ENCODE measurements at regions of chr11 and their contacts with region 1.

Region 1: DNA sequence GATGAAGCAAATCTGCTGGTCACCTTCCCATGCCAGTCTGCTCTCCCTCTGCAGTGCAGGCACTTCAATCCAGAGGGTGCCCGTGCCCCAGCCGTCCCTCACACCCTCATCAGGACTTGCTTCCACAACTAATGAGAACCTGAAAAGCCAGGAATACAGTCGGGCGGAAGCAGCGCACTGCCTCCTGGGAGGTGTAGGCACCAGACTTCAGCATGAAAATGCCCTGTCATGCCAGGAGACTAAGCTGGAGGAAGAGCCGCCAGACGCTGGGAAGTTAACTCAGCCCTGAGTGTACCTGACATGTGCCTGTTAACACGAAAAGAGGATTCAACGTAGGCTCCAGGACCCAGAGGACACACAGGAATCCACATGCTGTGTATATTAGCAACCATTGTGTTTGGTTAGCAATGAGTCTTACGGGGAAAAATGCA is 40.1 kb upstream of the FLI1 start:
- DNase-seq: peak; percentile 80
- H3K4me3 ChIP-seq: no peak overlapping the region
- H3K27ac ChIP-seq: no peak overlapping the region
- H3K4me1 ChIP-seq: no peaks in the 10 kb centered on the region
- H3K27me3 ChIP-seq: peaks cover 5% of the 10 kb centered on the region
- CTCF ChIP-seq: no peak

Region 2: DNA sequence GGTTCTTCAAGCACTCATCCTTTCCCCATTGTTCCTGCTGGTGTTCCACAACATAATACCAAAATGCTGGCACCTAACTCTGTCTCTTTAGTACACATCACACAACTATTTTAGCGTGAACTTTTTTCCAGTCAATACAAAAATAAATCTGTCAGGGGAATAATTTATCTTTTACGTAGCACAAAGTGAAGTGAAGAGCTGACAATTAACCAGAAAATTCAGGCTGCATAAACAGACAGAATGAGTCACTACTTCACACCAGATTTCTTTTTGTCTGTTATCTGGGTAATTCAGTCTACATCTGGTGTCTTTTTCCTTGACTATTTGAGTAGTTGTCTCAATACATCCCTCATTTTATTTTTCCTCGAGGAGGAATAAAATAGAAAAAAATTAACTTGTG is 58.6 kb before region 1 on chr11:
- CTCF ChIA-PET with region 1: no interaction called
- dilution Hi-C with region 1: no loop called
- in situ Hi-C with region 1: no loop called
- intact Hi-C with region 1: loop called (anchors 2 kb)
- DNase-seq: no peak
- H3K4me3 ChIP-seq: no peak overlapping the region
- H3K27ac ChIP-seq: no peak overlapping the region
- H3K4me1 ChIP-seq: no peaks in the 10 kb centered on the region
- H3K27me3 ChIP-seq: peaks cover 4% of the 10 kb centered on the region
- CTCF ChIP-seq: no peak

Region 3: DNA sequence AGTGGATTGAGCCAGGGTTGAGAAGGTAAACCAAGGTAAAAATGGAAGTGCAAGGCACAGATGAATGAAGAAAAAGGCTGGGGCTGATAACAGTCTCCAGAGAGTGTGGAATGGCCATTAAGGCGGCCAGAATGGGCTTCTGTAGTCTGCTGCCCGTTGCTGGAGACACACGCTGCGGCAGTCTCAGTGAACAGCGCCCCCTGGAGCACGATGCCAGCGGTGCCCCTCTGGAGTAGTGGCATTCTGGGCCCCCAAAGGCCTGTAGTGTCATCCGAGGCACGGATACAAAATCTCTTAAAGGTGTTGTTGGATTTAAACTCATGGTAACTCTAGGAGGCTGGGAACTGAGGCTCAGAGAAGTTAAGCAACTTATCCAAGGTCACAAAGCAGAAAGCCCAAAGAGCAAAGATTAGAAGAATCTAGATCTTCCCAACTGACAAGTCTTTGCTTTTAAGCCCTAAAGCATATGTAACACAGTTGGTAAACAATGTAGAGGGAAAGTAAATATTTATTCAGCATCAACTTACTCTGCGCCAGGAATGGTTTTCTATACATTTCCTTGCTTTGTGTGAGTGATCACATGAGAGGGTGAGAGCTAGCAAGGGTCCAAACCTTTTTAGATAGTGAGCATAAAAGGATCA is 195.1 kb after region 1 on chr11:
- CTCF ChIA-PET with region 1: no interaction called
- dilution Hi-C with region 1: no loop called
- in situ Hi-C with region 1: no loop called
- intact Hi-C with region 1: no loop called
- DNase-seq: no peak
- H3K4me3 ChIP-seq: no peak overlapping the region
- H3K27ac ChIP-seq: no peak overlapping the region
- H3K4me1 ChIP-seq: no peaks in the 10 kb centered on the region
- H3K27me3 ChIP-seq: no peaks in the 10 kb centered on the region
- CTCF ChIP-seq: peak; percentile 47 to 58

Region 4: DNA sequence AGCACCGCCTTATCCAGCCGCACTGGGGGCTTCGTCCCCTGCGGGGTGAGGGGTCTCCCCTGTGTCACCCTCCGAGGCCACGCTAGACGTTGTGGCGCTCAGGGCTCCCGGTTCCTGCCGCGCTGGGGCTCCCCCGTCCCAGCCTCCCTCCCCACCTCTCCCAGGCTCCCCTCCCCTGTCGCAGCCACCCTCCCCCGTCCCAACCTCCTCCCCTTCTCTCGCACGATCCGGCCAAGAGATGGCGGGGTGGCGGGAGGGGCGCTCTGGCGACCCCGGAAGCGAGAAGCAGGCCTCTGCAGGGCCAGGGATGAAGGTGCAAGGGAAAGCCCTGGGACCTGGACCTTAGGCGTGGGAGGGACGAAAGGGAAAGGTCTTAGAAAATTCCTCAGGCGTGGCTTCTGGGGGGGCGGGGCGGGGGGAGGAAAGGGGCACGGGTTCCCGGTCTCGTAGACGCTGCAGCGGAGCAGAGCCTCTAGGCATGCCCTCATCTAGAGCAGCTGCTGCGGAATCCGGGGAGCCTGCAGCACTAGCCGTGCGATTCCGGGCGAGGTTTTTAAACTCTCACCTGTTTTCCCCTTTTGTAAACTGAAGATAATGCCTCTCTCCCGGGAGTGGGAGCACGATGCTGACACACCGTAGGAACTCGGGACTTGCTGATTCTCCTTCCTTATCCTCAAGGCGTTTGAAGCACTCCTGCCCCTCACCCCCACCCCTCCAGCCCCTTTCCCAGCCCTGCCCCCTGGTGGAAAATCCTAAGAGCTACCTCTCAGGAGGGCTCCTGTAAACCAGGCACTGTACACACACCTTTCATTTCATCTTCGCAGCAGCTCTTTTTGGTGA is 251.7 kb after region 1 on chr11:
- CTCF ChIA-PET with region 1: no interaction called
- dilution Hi-C with region 1: no loop called
- in situ Hi-C with region 1: no loop called
- intact Hi-C with region 1: no loop called
- DNase-seq: peak; percentile 62
- H3K4me3 ChIP-seq: peak overlapping the region; percentile 33 to 60 (median 55)
- H3K27ac ChIP-seq: no peak overlapping the region
- H3K4me1 ChIP-seq: peaks cover 68% of the 10 kb centered on the region
- H3K27me3 ChIP-seq: no peaks in the 10 kb centered on the region
- CTCF ChIP-seq: peak; percentile 47 to 60